CD8-positive, alpha-beta memory T cell (primary cell): ENCODE measurements at regions of chr16 and their contacts with region 1.

Region 1: GRCh38 chr16:85554112-85554813 is 58.9 kb upstream of the GSE1 start:
- DNase-seq: peak; percentile 63 to 88 (median 75)
- H3K4me3 ChIP-seq: peak overlapping the region; percentile 91
- H3K4me3 Mint-ChIP-seq: peak overlapping the region; percentile 88 to 97 (median 95)
- H3K27ac ChIP-seq: peak overlapping the region; percentile 95
- H3K27ac Mint-ChIP-seq: peak overlapping the region; percentile 91 to 96 (median 94)
- H3K4me1 ChIP-seq: peaks cover 14% of the 10 kb centered on the region
- H3K4me1 Mint-ChIP-seq: peaks cover 36 to 49% (median 37%) of the 10 kb centered on the region in 3 donors
- H3K27me3 ChIP-seq: no peaks in the 10 kb centered on the region
- H3K27me3 Mint-ChIP-seq: peaks cover 0 to 3% of the 10 kb centered on the region in 2 donors

Region 2: GRCh38 chr16:85420501-85421337 is 133.5 kb before region 1 on chr16:
- CTCF ChIA-PET with region 1: interaction called, 14 read pairs
- POLR2A ChIA-PET with region 1: no interaction called
- DNase-seq: peak; percentile 66 to 80 (median 74)
- H3K4me3 ChIP-seq: no peak overlapping the region
- H3K4me3 Mint-ChIP-seq: no peak overlapping the region
- H3K27ac ChIP-seq: no peak overlapping the region
- H3K27ac Mint-ChIP-seq: peak overlapping the region in 3 of 8 donors; percentile 29 to 47 (median 46)
- H3K4me1 ChIP-seq: peaks cover 9% of the 10 kb centered on the region
- H3K4me1 Mint-ChIP-seq: peaks cover 0 to 8% (median 2%) of the 10 kb centered on the region in 3 donors
- H3K27me3 ChIP-seq: no peaks in the 10 kb centered on the region
- H3K27me3 Mint-ChIP-seq: peaks cover 4 to 6% of the 10 kb centered on the region in 2 donors

Region 3: GRCh38 chr16:85473909-85474620 is 80.2 kb before region 1 on chr16:
- CTCF ChIA-PET with region 1: no interaction called
- POLR2A ChIA-PET with region 1: no interaction called
- DNase-seq: no peak
- H3K4me3 ChIP-seq: no peak overlapping the region
- H3K4me3 Mint-ChIP-seq: no peak overlapping the region
- H3K27ac ChIP-seq: no peak overlapping the region
- H3K27ac Mint-ChIP-seq: no peak overlapping the region
- H3K4me1 ChIP-seq: no peaks in the 10 kb centered on the region
- H3K4me1 Mint-ChIP-seq: no peaks in the 10 kb centered on the region
- H3K27me3 ChIP-seq: no peaks in the 10 kb centered on the region
- H3K27me3 Mint-ChIP-seq: peaks cover 0 to 5% of the 10 kb centered on the region in 2 donors

Region 4: DNA sequence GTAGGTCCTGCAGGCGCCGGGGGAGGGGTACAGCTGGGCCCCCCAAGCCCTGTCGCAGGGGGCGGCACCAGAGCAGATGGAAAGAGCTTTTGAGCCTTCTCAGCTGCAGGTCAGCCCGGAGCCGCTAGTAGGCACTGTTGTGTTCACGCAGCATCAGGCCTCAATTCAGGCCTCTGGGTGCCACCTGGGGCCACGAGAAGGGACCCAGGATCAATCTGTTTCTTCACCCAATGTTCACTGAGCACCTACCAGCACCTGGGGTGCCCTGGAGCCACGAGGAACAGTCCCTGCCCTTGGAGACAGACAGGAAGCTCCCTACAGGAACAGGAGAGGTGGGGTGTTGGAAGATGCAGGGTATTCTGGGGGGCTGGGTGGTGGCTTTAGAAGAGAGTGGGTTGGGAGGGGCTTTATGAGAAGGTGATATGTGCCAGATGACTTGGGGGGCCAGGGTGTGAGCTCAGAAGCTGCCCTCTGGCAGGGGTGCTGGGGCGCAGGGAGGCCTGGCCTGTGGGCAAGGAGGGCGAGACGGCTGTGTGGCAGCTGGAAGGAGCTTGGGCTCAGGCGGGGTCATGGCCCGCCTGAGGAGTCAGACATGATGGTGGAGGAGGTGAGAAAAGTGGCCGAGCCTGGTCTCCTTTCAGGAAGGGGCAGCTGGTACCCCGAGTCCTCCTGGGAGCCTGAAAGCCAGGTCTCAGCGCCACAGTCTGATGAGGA is 63.0 kb before region 1 on chr16:
- CTCF ChIA-PET with region 1: interaction called, 13 read pairs
- POLR2A ChIA-PET with region 1: no interaction called
- DNase-seq: peak; percentile 16 to 52 (median 19)
- H3K4me3 ChIP-seq: no peak overlapping the region
- H3K4me3 Mint-ChIP-seq: peak overlapping the region in 1 of 7 donors; percentile 15
- H3K27ac ChIP-seq: no peak overlapping the region
- H3K27ac Mint-ChIP-seq: peak overlapping the region in 1 of 8 donors; percentile 56
- H3K4me1 ChIP-seq: no peaks in the 10 kb centered on the region
- H3K4me1 Mint-ChIP-seq: peaks cover 0 to 9% (median 2%) of the 10 kb centered on the region in 3 donors
- H3K27me3 ChIP-seq: no peaks in the 10 kb centered on the region
- H3K27me3 Mint-ChIP-seq: no peaks in the 10 kb centered on the region

Region 5: DNA sequence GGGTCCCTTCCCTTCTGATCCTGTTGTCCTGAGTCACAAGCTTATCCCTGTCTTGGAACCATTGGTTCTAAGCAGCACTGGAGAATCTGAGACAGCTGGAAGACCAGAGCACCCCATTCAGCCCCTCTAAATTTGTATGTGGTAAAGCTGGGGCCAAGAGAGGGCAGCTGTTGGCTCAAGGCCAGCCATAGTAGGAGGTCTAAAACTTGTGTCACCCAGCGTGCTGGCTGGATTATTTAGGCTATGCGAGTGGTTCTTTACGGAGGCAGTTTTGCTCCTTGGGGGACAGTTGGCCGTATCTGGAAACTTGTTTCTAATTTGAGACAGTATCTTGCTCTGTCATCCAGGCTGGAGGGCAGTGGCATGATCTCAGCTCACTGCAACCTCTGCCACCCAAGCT is 10.7 kb before region 1 on chr16:
- CTCF ChIA-PET with region 1: interaction called, 3 read pairs
- POLR2A ChIA-PET with region 1: interaction called, 11 read pairs
- DNase-seq: no peak
- H3K4me3 ChIP-seq: no peak overlapping the region
- H3K4me3 Mint-ChIP-seq: no peak overlapping the region
- H3K27ac ChIP-seq: no peak overlapping the region
- H3K27ac Mint-ChIP-seq: no peak overlapping the region
- H3K4me1 ChIP-seq: no peaks in the 10 kb centered on the region
- H3K4me1 Mint-ChIP-seq: peaks cover 0 to 3% (median 0%) of the 10 kb centered on the region in 3 donors
- H3K27me3 ChIP-seq: no peaks in the 10 kb centered on the region
- H3K27me3 Mint-ChIP-seq: no peaks in the 10 kb centered on the region

Region 6: DNA sequence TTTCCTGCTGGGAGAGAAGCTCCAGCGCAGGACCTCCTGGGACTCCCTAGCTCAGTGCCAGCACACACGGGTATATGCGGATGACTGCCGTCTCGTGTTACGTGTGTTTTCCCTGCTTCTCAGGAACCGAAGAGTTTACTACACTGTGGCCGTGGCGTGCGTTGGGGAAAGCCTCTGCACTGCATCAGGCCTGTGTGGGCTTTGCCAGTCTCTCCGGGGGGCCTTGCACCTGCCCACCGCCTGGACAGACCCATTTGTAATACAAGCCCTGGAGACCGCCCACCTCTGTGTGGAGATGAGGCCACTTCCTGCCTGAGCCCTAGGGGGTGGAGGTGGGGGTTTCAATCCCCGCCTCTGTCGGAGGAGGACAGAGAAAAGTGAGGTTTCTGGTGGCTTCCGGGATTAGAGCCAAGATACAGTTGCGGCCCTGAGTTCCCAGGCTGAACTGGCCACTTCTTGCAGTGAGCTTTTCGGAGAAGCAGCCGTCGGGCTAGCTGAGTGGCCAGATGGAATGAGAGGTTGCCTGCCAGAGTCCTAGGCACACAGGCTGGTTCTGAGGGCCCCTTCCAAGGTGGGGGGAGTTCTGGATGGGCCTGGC is 15.5 kb after region 1 on chr16:
- CTCF ChIA-PET with region 1: interaction called, 16 read pairs
- POLR2A ChIA-PET with region 1: interaction called, 38 read pairs
- DNase-seq: peak; percentile 37 to 79 (median 50)
- H3K4me3 ChIP-seq: peak overlapping the region; percentile 48
- H3K4me3 Mint-ChIP-seq: peak overlapping the region; percentile 81 to 93 (median 84)
- H3K27ac ChIP-seq: peak overlapping the region; percentile 68
- H3K27ac Mint-ChIP-seq: peak overlapping the region; percentile 89 to 99 (median 96)
- H3K4me1 ChIP-seq: peaks cover 59% of the 10 kb centered on the region
- H3K4me1 Mint-ChIP-seq: peaks cover 71 to 85% (median 76%) of the 10 kb centered on the region in 3 donors
- H3K27me3 ChIP-seq: no peaks in the 10 kb centered on the region
- H3K27me3 Mint-ChIP-seq: peaks cover 0 to 3% of the 10 kb centered on the region in 2 donors

Region 7: DNA sequence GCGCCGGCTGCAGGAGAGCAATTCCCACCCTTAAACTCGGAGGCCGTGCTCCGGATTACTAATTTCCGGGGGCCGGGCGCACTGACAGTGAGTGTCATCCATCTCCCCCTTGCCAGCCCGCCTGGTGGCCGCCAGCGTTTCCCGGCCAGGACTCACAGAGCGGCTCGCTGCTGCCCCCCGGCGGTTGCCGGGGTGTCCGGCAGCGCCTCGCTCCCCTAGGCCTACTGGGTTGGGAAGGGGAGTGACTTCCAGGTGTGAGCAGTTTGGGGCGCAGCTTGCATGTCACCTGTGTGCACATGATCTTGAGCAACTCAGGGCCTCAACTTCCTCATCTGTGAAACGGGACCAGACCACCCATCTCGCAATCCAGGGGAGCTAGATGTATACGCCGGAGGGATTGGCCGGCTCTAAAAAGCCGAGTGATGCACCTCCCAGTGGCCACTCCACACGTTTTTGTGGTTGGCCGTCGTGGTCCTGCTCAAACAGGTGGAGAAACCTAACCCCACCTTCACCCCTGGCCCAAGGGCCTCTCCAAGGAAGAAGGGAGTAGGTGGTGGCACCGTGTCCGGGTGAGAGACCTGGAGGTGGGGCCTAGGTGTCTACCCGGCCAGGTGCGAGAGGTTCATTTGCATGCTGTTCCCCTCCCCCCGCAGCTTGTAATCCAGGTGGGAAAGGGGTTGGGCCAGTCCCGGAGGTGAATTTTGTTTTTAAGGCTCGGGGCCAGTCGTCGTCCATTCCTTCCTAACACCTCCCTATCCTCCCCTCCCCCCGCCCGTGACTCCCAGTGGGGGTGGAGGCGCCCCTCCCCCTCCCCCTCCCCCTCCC is 56.5 kb after region 1 on chr16:
- CTCF ChIA-PET with region 1: interaction called, 50 read pairs
- POLR2A ChIA-PET with region 1: interaction called, 32 read pairs
- DNase-seq: peak; percentile 84 to 92 (median 85)
- H3K4me3 ChIP-seq: peak overlapping the region; percentile 51
- H3K4me3 Mint-ChIP-seq: peak overlapping the region; percentile 83 to 93 (median 87)
- H3K27ac ChIP-seq: no peak overlapping the region
- H3K27ac Mint-ChIP-seq: peak overlapping the region; percentile 42 to 95 (median 83)
- H3K4me1 ChIP-seq: peaks cover 42% of the 10 kb centered on the region
- H3K4me1 Mint-ChIP-seq: peaks cover 33 to 56% (median 40%) of the 10 kb centered on the region in 3 donors
- H3K27me3 ChIP-seq: no peaks in the 10 kb centered on the region
- H3K27me3 Mint-ChIP-seq: no peaks in the 10 kb centered on the region

Region 8: GRCh38 chr16:85728879-85729278 is 174.6 kb after region 1 on chr16:
- CTCF ChIA-PET with region 1: no interaction called
- POLR2A ChIA-PET with region 1: no interaction called
- DNase-seq: no peak
- H3K4me3 ChIP-seq: no peak overlapping the region
- H3K4me3 Mint-ChIP-seq: no peak overlapping the region
- H3K27ac ChIP-seq: no peak overlapping the region
- H3K27ac Mint-ChIP-seq: no peak overlapping the region
- H3K4me1 ChIP-seq: peaks cover 4% of the 10 kb centered on the region
- H3K4me1 Mint-ChIP-seq: peaks cover 4 to 19% (median 4%) of the 10 kb centered on the region in 3 donors
- H3K27me3 ChIP-seq: no peaks in the 10 kb centered on the region
- H3K27me3 Mint-ChIP-seq: no peaks in the 10 kb centered on the region